GM12878 (cell line): ENCODE measurements at regions of chr10 and their contacts with region 1.

Region 1: DNA sequence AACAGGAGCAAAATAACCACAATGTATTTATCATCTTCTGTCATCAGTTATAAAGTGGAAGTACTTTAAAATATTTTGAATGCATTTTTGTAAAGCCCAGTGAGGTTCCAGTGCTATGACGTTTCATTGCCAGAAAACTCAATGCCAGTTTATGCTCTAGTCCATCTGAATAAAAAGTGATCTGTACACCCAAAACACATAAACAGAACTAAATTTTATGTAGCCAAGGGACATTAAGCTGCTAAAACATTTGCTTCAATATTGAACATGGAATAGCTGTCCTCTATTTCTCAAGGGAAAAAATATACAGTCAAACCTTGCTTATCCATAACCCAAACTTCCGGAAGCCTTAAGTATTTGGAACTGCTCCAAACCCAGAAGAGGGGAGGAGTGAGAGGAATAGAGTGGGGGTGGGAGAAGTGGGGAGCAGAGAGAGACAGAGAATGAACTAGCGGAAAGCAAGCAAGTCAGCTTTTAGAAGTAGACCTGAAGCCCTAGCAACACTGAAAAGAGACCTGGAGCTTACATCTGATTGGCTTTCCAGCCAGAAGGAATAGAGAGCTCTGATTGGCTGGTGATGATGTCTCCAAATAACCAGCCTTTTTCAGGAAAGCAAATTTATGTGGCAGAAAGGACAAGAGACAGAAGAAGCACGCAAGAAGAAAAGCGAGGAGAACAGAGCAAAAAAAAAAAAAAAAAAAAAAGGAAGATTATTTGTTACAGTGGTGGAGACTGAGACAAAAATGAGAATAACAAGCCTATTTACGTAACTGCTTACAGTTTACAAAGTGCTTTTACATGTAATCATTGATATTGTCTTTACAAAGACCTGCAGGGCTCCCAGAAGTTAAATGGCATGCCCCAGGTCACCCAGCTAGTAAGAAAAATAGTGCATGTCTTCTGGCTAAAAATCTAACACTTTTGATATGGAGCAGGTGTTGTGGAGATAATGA is 196.0 kb downstream of the RNLS start:
- DNase-seq: peak; percentile 80
- ATAC-seq: peak; percentile 82
- H3K4me3 ChIP-seq: peak overlapping the region; percentile 48
- H3K27ac ChIP-seq: peak overlapping the region; percentile 99
- H3K4me1 ChIP-seq: peaks cover 63% of the 10 kb centered on the region
- H3K27me3 ChIP-seq: no peaks in the 10 kb centered on the region
- CTCF ChIP-seq: no peak
- EP300 ChIP-seq: 0 out of 4 replicates have a peak, but pooled peaks of 1 of the 2 experiments have one; percentile 37
- POLR2A ChIP-seq: no peak; the same call in none of the 2 replicates
- RAD21 ChIP-seq: no peak

Region 2: DNA sequence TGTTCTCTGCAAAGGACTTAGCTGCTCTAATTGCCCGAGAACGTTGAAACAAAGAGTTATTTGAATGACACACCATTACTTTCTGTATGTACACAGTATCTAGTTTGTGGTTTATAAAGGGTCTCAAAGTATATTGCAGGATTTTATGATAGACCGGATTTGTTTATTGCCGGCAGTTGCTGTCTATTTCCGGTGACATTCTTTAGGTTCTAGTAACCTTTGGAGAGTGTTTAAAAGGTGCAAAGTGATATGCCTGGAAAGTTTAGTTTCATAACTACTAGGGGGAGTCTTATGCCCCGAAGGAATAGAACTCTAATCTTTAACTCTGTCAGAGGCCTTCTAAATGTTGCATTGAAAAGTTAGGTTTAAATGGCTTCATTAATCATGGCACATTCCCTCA is 663.6 kb before region 1 on chr10:
- CTCF ChIA-PET with region 1: no interaction called
- POLR2A ChIA-PET with region 1: no interaction called
- RAD21 ChIA-PET with region 1: no interaction called
- SMC1A ChIA-PET with region 1: no interaction called
- in situ Hi-C with region 1: no loop called
- intact Hi-C with region 1: no loop called
- DNase-seq: no peak
- ATAC-seq: no peak
- H3K4me3 ChIP-seq: no peak overlapping the region
- H3K27ac ChIP-seq: no peak overlapping the region
- H3K4me1 ChIP-seq: no peaks in the 10 kb centered on the region; the same call in 1 of the 2 replicates
- H3K27me3 ChIP-seq: no peaks in the 10 kb centered on the region
- CTCF ChIP-seq: no peak
- EP300 ChIP-seq: no peak
- POLR2A ChIP-seq: no peak
- RAD21 ChIP-seq: no peak

Region 3: DNA sequence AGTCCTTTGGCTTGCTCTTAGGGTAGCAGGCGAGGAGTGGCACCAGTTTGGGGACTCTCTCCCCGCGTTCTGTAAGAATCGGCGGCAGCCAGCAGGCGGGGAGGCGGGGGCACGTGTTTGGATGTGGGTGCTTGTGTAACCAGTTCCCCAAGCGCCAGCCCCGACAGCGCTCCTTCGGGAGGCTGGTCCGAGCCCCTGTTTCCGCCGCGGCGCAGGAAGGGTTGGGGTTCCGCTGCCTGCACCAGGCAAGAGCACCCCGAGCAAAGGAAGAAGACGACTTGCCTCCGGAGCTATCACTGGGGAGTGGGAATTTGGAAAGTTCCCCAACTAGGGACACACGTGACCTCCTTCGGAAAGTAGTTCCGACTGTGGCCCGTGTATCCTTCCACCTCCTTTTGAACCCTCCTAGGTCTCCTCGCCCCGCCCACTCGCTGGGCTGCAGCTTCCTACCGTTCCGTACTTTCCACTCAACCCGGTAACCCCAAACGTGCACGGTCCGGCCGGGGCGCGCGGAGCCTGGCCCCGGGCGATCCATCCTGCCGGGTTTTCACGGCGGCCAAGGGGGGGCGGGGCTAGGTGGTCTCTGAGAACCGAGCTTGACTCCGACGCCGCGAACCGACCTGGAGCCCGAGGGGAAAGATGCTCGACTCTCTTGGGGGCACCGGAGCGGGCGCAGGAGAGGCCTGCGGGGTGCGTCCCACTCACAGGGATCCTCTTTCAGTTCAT is 525.0 kb before region 1 on chr10:
- CTCF ChIA-PET with region 1: interaction called, 98 read pairs
- POLR2A ChIA-PET with region 1: interaction called, 53 read pairs
- RAD21 ChIA-PET with region 1: interaction called, 158 read pairs
- SMC1A ChIA-PET with region 1: interaction called, 140 read pairs
- in situ Hi-C with region 1: loop called (anchors 5 kb)
- intact Hi-C with region 1: loop called (anchors 1 kb)
- DNase-seq: peak; percentile 95
- ATAC-seq: peak; percentile 55
- H3K4me3 ChIP-seq: peak overlapping the region; percentile 84
- H3K27ac ChIP-seq: peak overlapping the region; percentile 98
- H3K4me1 ChIP-seq: peaks cover 8% of the 10 kb centered on the region
- H3K27me3 ChIP-seq: no peaks in the 10 kb centered on the region
- CTCF ChIP-seq: no peak
- EP300 ChIP-seq: peak in 1 of 2 experiments; percentile 72; a peak in 2 of 4 replicates
- POLR2A ChIP-seq: peak; percentile 87
- RAD21 ChIP-seq: peak; percentile 37

Region 4: GRCh38 chr10:88080213-88080612 is 306.9 kb before region 1 on chr10:
- CTCF ChIA-PET with region 1: interaction called, 7 read pairs
- POLR2A ChIA-PET with region 1: interaction called, 5 read pairs
- RAD21 ChIA-PET with region 1: interaction called, 13 read pairs
- SMC1A ChIA-PET with region 1: interaction called, 35 read pairs
- in situ Hi-C with region 1: no loop called
- intact Hi-C with region 1: no loop called
- DNase-seq: no peak
- ATAC-seq: peak; percentile 75
- H3K4me3 ChIP-seq: peak overlapping the region; percentile 30
- H3K27ac ChIP-seq: peak overlapping the region; percentile 60
- H3K4me1 ChIP-seq: peaks cover 52% of the 10 kb centered on the region
- H3K27me3 ChIP-seq: no peaks in the 10 kb centered on the region
- CTCF ChIP-seq: no peak
- EP300 ChIP-seq: peak; percentile 75 to 82; a peak in 3 of 4 replicates
- POLR2A ChIP-seq: no peak
- RAD21 ChIP-seq: 0 out of 2 replicates have a peak, but pooled peaks have one; percentile 15

Region 5: GRCh38 chr10:88120599-88121333 is 266.3 kb before region 1 on chr10:
- CTCF ChIA-PET with region 1: interaction called, 51 read pairs
- POLR2A ChIA-PET with region 1: interaction called, 9 read pairs
- RAD21 ChIA-PET with region 1: interaction called, 39 read pairs
- SMC1A ChIA-PET with region 1: interaction called, 192 read pairs
- in situ Hi-C with region 1: no loop called
- intact Hi-C with region 1: loop called (anchors 2 kb)
- DNase-seq: no peak
- ATAC-seq: no peak
- H3K4me3 ChIP-seq: no peak overlapping the region
- H3K27ac ChIP-seq: no peak overlapping the region
- H3K4me1 ChIP-seq: peaks cover 43% of the 10 kb centered on the region
- H3K27me3 ChIP-seq: no peaks in the 10 kb centered on the region
- CTCF ChIP-seq: no peak
- EP300 ChIP-seq: no peak
- POLR2A ChIP-seq: no peak
- RAD21 ChIP-seq: no peak

Region 6: GRCh38 chr10:88226071-88226659 is 160.9 kb before region 1 on chr10:
- CTCF ChIA-PET with region 1: interaction called, 24 read pairs
- POLR2A ChIA-PET with region 1: no interaction called
- RAD21 ChIA-PET with region 1: interaction called, 4 read pairs
- SMC1A ChIA-PET with region 1: interaction called, 13 read pairs
- in situ Hi-C with region 1: no loop called
- intact Hi-C with region 1: no loop called
- DNase-seq: no peak
- ATAC-seq: no peak
- H3K4me3 ChIP-seq: no peak overlapping the region
- H3K27ac ChIP-seq: no peak overlapping the region
- H3K4me1 ChIP-seq: no peaks in the 10 kb centered on the region
- H3K27me3 ChIP-seq: no peaks in the 10 kb centered on the region
- CTCF ChIP-seq: no peak
- EP300 ChIP-seq: no peak
- POLR2A ChIP-seq: no peak
- RAD21 ChIP-seq: no peak

Region 7: DNA sequence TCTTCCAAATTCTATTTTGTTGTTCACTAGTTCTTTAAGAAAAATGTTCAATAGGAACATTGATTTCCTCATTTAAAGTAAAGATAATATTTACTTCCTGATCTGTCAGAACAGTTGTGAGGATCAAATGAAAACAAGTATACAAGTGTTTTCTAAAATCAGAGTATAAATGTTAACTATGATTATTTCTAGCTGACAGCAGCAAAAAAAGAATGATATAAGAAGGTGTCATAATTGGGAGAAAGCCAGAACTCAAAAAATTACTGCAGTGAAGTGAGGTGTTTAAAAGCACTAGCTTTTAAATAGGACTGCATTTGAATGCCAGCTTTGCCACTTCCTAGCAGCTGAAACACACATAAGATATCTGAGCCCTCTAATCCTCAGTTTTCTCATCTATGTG is 87.3 kb before region 1 on chr10:
- CTCF ChIA-PET with region 1: interaction called, 40 read pairs
- POLR2A ChIA-PET with region 1: no interaction called
- RAD21 ChIA-PET with region 1: interaction called, 6 read pairs
- SMC1A ChIA-PET with region 1: interaction called, 12 read pairs
- in situ Hi-C with region 1: no loop called
- intact Hi-C with region 1: loop called (anchors 5 kb)
- DNase-seq: no peak
- ATAC-seq: no peak
- H3K4me3 ChIP-seq: no peak overlapping the region
- H3K27ac ChIP-seq: no peak overlapping the region
- H3K4me1 ChIP-seq: no peaks in the 10 kb centered on the region
- H3K27me3 ChIP-seq: no peaks in the 10 kb centered on the region
- CTCF ChIP-seq: no peak
- EP300 ChIP-seq: no peak
- POLR2A ChIP-seq: no peak
- RAD21 ChIP-seq: no peak

Region 8: DNA sequence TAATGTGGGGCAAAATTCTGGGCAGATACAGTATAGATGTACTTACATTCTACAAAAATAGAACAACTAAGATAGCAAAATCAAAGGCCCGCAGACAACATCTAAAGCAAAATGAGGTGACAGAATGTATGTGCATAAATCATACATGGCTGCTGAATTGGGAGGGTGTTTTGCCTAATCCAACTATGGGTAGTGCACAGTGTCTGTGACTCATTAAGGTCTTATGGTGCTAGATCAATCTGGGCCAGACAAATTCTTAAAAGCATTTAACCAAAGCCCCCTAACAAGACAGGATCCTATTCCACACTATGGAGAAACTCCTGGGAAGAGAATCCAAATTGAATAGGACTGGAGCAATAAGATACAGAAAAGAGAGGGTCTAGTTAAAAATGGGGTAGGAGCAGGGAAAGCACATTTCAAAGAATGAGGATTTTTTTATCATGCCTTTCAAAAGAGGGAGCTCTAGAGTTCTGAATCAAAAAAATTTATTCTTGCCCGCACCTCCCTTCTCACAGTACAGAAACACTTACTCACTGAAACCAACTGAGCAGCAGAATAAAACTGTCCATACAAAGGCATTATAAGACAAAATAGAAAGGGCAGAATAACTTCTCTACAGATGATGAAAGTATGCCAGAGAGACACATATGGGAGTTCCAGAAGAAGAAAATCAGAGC is 14.7 kb after region 1 on chr10:
- CTCF ChIA-PET with region 1: interaction called, 42 read pairs
- POLR2A ChIA-PET with region 1: interaction called, 3 read pairs
- RAD21 ChIA-PET with region 1: interaction called, 7 read pairs
- SMC1A ChIA-PET with region 1: interaction called, 9 read pairs
- in situ Hi-C with region 1: no loop called
- intact Hi-C with region 1: no loop called
- DNase-seq: no peak
- ATAC-seq: peak; percentile 51
- H3K4me3 ChIP-seq: no peak overlapping the region
- H3K27ac ChIP-seq: no peak overlapping the region
- H3K4me1 ChIP-seq: no peaks in the 10 kb centered on the region
- H3K27me3 ChIP-seq: no peaks in the 10 kb centered on the region
- CTCF ChIP-seq: peak; percentile 11 to 33 (median 14); a peak in 3 of 6 replicates
- EP300 ChIP-seq: no peak
- POLR2A ChIP-seq: no peak
- RAD21 ChIP-seq: peak; percentile 35; the same call in 1 of the 2 replicates